Calu3 (cell line): ENCODE measurements at regions of chr19 and their contacts with region 1.

Region 1: DNA sequence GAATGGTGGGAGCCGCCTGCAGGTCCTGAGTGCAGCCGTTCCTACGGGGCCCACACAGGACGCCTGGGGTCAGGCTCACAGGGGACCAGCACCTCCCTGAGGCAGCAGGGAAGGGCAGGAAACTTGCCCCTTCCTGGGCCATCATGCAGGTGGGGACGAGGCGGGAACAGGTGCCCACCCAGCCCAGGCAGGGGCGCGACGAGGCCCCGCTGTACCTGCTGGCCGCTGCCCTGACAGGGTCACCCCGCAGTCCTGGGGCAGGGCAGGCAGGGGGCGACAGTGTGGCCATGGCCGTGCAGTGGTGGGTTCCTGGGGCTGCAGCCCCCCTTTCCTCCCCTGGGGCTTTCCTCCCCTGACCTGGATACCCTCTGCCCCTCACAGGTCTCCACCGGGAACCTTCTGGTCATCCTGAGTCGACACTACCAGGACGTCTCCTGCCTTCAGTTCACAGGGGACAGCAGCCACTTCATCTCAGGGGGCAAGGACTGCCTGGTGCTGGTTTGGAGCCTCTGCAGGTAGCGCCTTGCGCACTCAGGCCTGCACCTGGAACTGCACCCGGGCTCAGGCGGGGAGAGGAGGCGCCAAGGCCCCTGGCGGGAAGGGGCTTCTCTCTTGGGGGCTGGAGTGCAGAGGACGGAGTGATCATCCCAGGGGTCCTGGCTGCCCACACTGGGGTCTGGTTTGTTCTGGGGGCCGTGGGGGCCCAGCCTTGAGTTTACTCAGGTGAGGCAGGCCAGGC is 5.4 kb downstream of the WDR18 start:
- DNase-seq: no peak
- H3K4me3 Mint-ChIP-seq: no peak overlapping the region
- H3K27ac Mint-ChIP-seq: no peak overlapping the region
- H3K4me1 Mint-ChIP-seq: no peaks in the 10 kb centered on the region
- H3K27me3 Mint-ChIP-seq: no peaks in the 10 kb centered on the region
- CTCF ChIP-seq: no peak

Region 2: GRCh38 chr19:1189419-1189818 is 199.9 kb after region 1 on chr19:
- CTCF ChIA-PET with region 1: interaction called, 11 read pairs
- intact Hi-C with region 1: no loop called
- DNase-seq: no peak
- H3K4me3 Mint-ChIP-seq: no peak overlapping the region
- H3K27ac Mint-ChIP-seq: no peak overlapping the region
- H3K4me1 Mint-ChIP-seq: peaks cover 7% of the 10 kb centered on the region
- H3K27me3 Mint-ChIP-seq: no peaks in the 10 kb centered on the region
- CTCF ChIP-seq: no peak